Left ventricle myocardium superior (tissue), 1 donor: ENCODE measurements at regions of chr1 and their contacts with region 1.

Region 1: DNA sequence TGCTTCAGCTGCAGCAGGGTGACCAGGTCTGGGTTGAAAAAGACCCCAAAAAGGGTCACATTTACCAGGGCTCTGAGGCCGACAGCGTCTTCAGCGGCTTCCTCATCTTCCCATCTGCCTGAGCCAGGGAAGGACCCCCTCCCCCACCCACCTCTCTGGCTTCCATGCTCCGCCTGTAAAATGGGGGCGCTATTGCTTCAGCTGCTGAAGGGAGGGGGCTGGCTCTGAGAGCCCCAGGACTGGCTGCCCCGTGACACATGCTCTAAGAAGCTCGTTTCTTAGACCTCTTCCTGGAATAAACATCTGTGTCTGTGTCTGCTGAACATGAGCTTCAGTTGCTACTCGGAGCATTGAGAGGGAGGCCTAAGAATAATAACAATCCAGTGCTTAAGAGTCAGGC is 2.9 kb downstream of the C1QA start:
- DNase-seq: no peak
- ATAC-seq: no peak

Region 2: GRCh38 chr1:22420455-22421053 is 218.7 kb before region 1 on chr1:
- intact Hi-C with region 1: loop called (anchors 10 kb)
- DNase-seq: peak; percentile 89
- ATAC-seq: peak; percentile 87